ENCODE measurements at regions of chr3 and their contacts with region 1.

Region 1: DNA sequence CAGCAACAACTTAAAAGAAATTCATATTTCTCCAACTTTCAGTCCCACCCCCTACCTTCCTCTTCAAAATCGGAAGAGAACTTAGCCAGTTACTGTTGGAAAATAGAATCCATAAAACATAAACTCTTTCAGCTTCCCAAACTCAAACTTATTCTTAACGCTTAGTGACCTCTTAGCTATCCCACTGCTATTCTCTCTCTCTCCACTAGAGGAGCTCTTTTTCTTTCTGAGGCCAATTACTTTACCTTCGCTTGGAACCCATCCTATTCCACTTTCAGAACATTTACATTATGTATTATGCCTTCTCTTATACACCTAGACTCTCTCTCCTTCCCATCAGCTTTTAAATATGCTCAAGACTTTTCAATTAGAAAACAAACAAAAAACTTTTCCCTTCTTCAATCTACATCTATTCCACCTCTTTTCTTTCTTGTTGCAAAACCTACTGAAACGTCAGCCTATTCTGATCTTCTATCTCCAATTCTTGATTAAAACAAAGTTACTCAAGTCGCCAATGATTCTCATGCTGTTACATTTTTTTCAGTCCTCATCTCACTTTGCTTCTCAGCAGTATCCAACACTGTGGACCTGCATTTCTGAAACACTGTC is 13.4 kb upstream of the GHSR start:
- DNase-seq: no peak
- H3K4me3 Mint-ChIP-seq: no peak overlapping the region
- H3K27ac Mint-ChIP-seq: no peak overlapping the region
- H3K4me1 Mint-ChIP-seq: peaks cover 4% of the 10 kb centered on the region
- H3K27me3 Mint-ChIP-seq: peaks cover 8% of the 10 kb centered on the region

Region 2: GRCh38 chr3:171736556-171736955 is 725.1 kb before region 1 on chr3:
- intact Hi-C with region 1: no loop called
- DNase-seq: no peak
- H3K4me3 Mint-ChIP-seq: no peak overlapping the region
- H3K27ac Mint-ChIP-seq: no peak overlapping the region
- H3K4me1 Mint-ChIP-seq: no peaks in the 10 kb centered on the region
- H3K27me3 Mint-ChIP-seq: peaks cover 18% of the 10 kb centered on the region

Region 3: DNA sequence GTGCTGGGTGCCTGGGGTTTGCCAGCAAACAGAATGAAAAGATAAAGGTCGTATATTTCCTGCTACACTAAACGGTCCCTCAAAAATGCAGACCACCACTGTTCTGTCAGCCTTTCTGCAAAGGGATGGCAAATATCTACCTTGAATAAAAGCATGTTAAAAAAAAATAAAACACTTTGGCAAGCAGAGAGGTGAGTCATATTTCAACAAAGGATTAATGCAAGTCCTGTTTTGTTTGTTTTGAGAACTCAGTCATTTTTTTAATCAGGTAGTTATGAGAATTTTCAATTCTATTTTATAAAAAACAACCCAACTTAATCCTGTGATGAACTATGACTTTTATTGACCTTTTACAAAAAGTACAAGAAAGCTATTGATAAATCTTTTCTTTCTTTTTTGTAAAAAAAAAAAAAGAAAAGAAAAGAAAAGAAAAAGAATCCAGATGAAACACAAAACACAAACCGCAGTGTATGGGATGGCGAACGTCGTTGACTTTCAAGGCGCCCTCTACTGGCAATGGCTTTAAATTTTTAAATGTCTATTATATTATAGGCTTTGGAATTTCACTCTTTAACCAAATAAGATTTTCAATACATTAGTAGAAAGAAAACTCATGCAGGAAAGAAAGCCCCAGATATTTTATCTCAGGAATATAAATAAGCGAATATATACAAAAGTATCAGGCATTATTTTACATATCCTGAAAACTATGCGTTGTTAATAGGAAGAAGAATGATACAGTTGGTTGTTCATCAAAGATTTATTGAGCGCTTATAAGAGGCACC is 161.5 kb after region 1 on chr3:
- intact Hi-C with region 1: loop called (anchors 1 kb)
- DNase-seq: no peak
- H3K4me3 Mint-ChIP-seq: no peak overlapping the region
- H3K27ac Mint-ChIP-seq: no peak overlapping the region
- H3K4me1 Mint-ChIP-seq: peaks cover 9% of the 10 kb centered on the region
- H3K27me3 Mint-ChIP-seq: no peaks in the 10 kb centered on the region

Region 4: GRCh38 chr3:172698631-172699030 is 237.0 kb after region 1 on chr3:
- intact Hi-C with region 1: no loop called
- DNase-seq: no peak
- H3K4me3 Mint-ChIP-seq: no peak overlapping the region
- H3K27ac Mint-ChIP-seq: no peak overlapping the region
- H3K4me1 Mint-ChIP-seq: peaks cover 7% of the 10 kb centered on the region
- H3K27me3 Mint-ChIP-seq: no peaks in the 10 kb centered on the region